Activated CD4-positive, alpha-beta T cell treated with anti-CD3 and anti-CD28 coated beads for 36 hours (primary cell): ENCODE measurements at regions of chr1 and their contacts with region 1.

Region 1: DNA sequence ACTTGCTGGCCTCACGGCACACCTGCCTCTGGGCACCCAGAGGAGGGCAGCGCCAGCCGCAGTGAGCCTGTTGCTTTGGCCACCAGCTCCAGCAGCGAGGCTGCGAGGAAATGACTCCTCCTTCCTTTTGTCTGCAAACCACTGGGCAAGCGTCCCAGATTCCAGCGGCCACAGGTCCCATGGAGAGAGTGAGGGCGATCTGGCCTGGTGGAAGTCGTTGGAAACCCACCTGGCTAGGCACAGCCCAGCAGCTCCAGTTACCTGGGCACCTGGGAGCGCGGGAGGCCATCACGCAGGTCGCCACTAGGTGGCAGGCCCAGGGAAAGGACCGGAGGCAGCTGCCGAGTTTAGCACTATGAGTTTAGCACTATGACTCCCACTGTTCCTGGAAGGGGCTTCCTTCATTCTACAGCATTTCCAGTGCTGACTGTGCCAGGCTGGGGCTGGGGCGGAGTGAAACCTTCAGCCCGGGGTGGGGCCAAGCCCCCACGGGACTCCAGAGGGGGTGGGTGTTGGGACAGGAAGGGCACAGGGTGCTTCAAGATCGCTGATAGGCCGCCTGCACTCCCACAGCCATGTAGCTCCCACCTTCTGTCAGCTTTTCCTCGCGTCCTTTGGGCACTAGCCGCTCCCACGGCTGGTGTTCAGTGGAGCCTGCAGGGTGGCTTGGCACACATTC is 1.1 kb upstream of the ESPN start:
- DNase-seq: peak; percentile 87
- ATAC-seq: peak; percentile 83
- H3K4me3 Mint-ChIP-seq: peak overlapping the region; percentile 7
- H3K27ac Mint-ChIP-seq: no peak overlapping the region
- H3K4me1 Mint-ChIP-seq: peaks cover 12% of the 10 kb centered on the region
- H3K27me3 Mint-ChIP-seq: peaks cover 36% of the 10 kb centered on the region

Region 2: GRCh38 chr1:6116137-6116536 is 307.3 kb before region 1 on chr1:
- CTCF ChIA-PET with region 1: no interaction called
- POLR2A ChIA-PET with region 1: no interaction called
- intact Hi-C with region 1: no loop called
- DNase-seq: no peak
- ATAC-seq: no peak
- H3K4me3 Mint-ChIP-seq: no peak overlapping the region
- H3K27ac Mint-ChIP-seq: no peak overlapping the region
- H3K4me1 Mint-ChIP-seq: no peaks in the 10 kb centered on the region
- H3K27me3 Mint-ChIP-seq: peaks cover 2% of the 10 kb centered on the region

Region 3: DNA sequence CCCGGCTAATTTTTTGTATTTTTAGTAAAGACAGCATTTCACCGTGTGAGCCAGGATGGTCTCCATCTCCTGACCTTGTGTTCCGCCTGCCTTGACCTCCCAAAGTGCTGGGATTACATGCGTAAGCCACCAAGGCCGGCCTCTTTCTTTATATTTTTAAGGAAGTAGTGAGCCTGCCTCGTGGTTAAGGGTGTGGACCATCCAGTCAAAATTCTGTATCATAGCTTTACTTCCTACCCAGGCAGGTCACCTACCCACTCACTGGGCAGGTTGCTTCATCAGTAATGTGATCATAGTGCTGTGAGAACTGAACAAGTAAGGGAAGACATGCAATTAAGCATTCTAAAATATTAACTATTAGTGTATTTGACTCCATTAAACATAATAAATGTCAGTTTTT is 21.8 kb before region 1 on chr1:
- CTCF ChIA-PET with region 1: interaction called, 10 read pairs
- POLR2A ChIA-PET with region 1: no interaction called
- intact Hi-C with region 1: no loop called
- DNase-seq: no peak
- ATAC-seq: no peak
- H3K4me3 Mint-ChIP-seq: no peak overlapping the region
- H3K27ac Mint-ChIP-seq: no peak overlapping the region
- H3K4me1 Mint-ChIP-seq: no peaks in the 10 kb centered on the region
- H3K27me3 Mint-ChIP-seq: peaks cover 2% of the 10 kb centered on the region

Region 4: DNA sequence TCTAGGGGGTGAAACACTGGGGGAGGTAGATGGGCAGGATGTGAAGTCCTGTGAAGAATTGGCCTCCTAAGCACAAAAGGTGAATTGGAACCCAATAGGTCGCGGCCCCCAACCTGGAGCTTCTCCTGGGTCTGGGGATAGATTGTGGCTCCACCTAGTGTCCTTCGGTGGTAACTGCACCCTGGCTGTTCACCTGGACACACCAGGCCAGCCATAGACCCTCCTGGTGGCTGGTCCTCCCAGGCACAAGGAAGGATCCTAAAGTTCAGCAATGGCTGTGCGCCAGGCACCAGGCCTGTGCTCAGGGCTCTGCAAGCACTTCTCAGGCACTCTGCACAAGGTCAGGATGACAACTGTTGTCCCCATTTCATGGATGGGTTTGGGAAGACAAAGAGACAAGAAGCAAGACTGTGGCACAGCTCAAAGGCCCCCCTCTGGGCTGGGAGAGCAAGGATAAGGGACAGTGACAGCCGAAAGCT is 14.6 kb after region 1 on chr1:
- CTCF ChIA-PET with region 1: interaction called, 55 read pairs
- POLR2A ChIA-PET with region 1: interaction called, 6 read pairs
- intact Hi-C with region 1: loop called (anchors 1 to 2 kb)
- DNase-seq: peak; percentile 85
- ATAC-seq: peak; percentile 72
- H3K4me3 Mint-ChIP-seq: no peak overlapping the region
- H3K27ac Mint-ChIP-seq: no peak overlapping the region
- H3K4me1 Mint-ChIP-seq: peaks cover 2% of the 10 kb centered on the region
- H3K27me3 Mint-ChIP-seq: peaks cover 16% of the 10 kb centered on the region

Region 5: GRCh38 chr1:6475381-6476133 is 52.1 kb after region 1 on chr1:
- CTCF ChIA-PET with region 1: interaction called, 6 read pairs
- POLR2A ChIA-PET with region 1: no interaction called
- intact Hi-C with region 1: loop called in 1 of 2 experiments (anchors 1 kb)
- DNase-seq: peak; percentile 84
- ATAC-seq: peak; percentile 94
- H3K4me3 Mint-ChIP-seq: no peak overlapping the region
- H3K27ac Mint-ChIP-seq: no peak overlapping the region
- H3K4me1 Mint-ChIP-seq: peaks cover 2% of the 10 kb centered on the region
- H3K27me3 Mint-ChIP-seq: no peaks in the 10 kb centered on the region

Region 6: GRCh38 chr1:6535214-6535613 is 111.8 kb after region 1 on chr1:
- CTCF ChIA-PET with region 1: no interaction called
- POLR2A ChIA-PET with region 1: no interaction called
- intact Hi-C with region 1: no loop called
- DNase-seq: no peak
- ATAC-seq: no peak
- H3K4me3 Mint-ChIP-seq: no peak overlapping the region
- H3K27ac Mint-ChIP-seq: no peak overlapping the region
- H3K4me1 Mint-ChIP-seq: no peaks in the 10 kb centered on the region
- H3K27me3 Mint-ChIP-seq: no peaks in the 10 kb centered on the region

Region 7: GRCh38 chr1:7046314-7046713 is 622.9 kb after region 1 on chr1:
- CTCF ChIA-PET with region 1: no interaction called
- POLR2A ChIA-PET with region 1: no interaction called
- intact Hi-C with region 1: no loop called
- DNase-seq: no peak
- ATAC-seq: no peak
- H3K4me3 Mint-ChIP-seq: no peak overlapping the region
- H3K27ac Mint-ChIP-seq: no peak overlapping the region
- H3K4me1 Mint-ChIP-seq: no peaks in the 10 kb centered on the region
- H3K27me3 Mint-ChIP-seq: peaks cover 4% of the 10 kb centered on the region